ENCODE measurements at regions of chr5 and their contacts with region 1.

Region 1: GRCh38 chr5:168291464-168291961 is at the start of gene WWC1:
- DNase-seq: peak in 1 of 2 experiments; percentile 92
- H3K4me3 ChIP-seq: peak within 1 kb of the TSS; percentile 58 to 75 (median 68)
- H3K27ac ChIP-seq: no peak within 1 kb of the TSS
- H3K4me1 ChIP-seq: peaks cover 12 to 32% (median 20%) of the 10 kb centered on the region in 4 experiments
- H3K27me3 ChIP-seq: no peaks in the 10 kb centered on the region; a peak in 1 of 7 replicates
- CTCF ChIP-seq: peak in 2 of 3 experiments; percentile 25 to 52; a peak in 3 of 4 replicates
- EP300 ChIP-seq: no peak
- POLR2A ChIP-seq: peak in 1 of 2 experiments; percentile 61; a peak in 2 of 3 replicates
- RAD21 ChIP-seq: peak; percentile 45 to 53
- total RNA-seq, gene WWC1: 41.1 and 42.7 TPM in 2 replicates

Region 2: GRCh38 chr5:168301593-168302388 is 10.3 kb after region 1 on chr5:
- CTCF ChIA-PET with region 1: interaction called, 45 read pairs
- POLR2A ChIA-PET with region 1: interaction called, 9 read pairs
- DNase-seq: no peak
- H3K4me3 ChIP-seq: 0 out of 8 replicates have a peak overlapping the region, but pooled peaks of 1 of the 4 experiments have one; percentile 7
- H3K27ac ChIP-seq: no peak overlapping the region
- H3K4me1 ChIP-seq: peaks cover 15 to 41% (median 32%) of the 10 kb centered on the region in 4 experiments
- H3K27me3 ChIP-seq: no peaks in the 10 kb centered on the region
- CTCF ChIP-seq: no peak
- EP300 ChIP-seq: no peak
- POLR2A ChIP-seq: no peak
- RAD21 ChIP-seq: no peak

Region 3: GRCh38 chr5:168328814-168329213 is 37.3 kb after region 1 on chr5:
- CTCF ChIA-PET with region 1: interaction called, 40 read pairs
- POLR2A ChIA-PET with region 1: interaction called, 7 read pairs
- DNase-seq: peak in 1 of 2 experiments; percentile 69
- H3K4me3 ChIP-seq: peak overlapping the region in 1 of 4 experiments; percentile 38; a peak in 2 of 8 replicates
- H3K27ac ChIP-seq: no peak overlapping the region
- H3K4me1 ChIP-seq: peaks cover 21 to 36% (median 26%) of the 10 kb centered on the region in 4 experiments
- H3K27me3 ChIP-seq: no peaks in the 10 kb centered on the region
- CTCF ChIP-seq: no peak
- EP300 ChIP-seq: peak in 1 of 2 experiments; percentile 95; a peak in 2 of 3 replicates
- POLR2A ChIP-seq: no peak
- RAD21 ChIP-seq: no peak

Region 4: DNA sequence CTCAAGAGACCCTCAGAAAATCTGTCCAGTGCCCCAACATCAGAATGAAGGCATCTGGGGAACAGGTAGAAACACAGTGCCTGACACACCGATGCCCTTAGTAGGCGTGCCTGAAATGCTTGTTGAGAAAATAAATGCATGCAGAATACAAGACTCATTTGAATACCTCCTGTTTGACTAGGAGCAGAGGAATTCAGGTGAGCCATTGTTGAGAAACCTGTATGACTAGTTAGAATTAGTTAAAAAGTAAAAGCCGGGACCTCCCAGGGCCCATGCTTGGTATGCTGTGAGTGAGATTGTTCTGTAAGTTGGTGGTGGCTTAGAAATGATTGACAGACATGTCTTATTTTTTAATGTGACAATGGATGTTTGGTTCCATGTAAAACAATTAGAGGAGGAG is 54.9 kb after region 1 on chr5:
- CTCF ChIA-PET with region 1: interaction called, 13 read pairs
- POLR2A ChIA-PET with region 1: interaction called, 6 read pairs
- DNase-seq: no peak
- H3K4me3 ChIP-seq: peak overlapping the region in 2 of 4 experiments; percentile 24 to 25; a peak in 1 of 8 replicates
- H3K27ac ChIP-seq: no peak overlapping the region
- H3K4me1 ChIP-seq: peaks cover 17 to 44% (median 27%) of the 10 kb centered on the region in 4 experiments
- H3K27me3 ChIP-seq: no peaks in the 10 kb centered on the region
- CTCF ChIP-seq: no peak
- EP300 ChIP-seq: no peak
- POLR2A ChIP-seq: no peak
- RAD21 ChIP-seq: no peak

Measured in H1 (cell line).